Kidney (tissue), 22 donors: ENCODE measurements at regions of chr1 and their contacts with region 1.

Region 1: DNA sequence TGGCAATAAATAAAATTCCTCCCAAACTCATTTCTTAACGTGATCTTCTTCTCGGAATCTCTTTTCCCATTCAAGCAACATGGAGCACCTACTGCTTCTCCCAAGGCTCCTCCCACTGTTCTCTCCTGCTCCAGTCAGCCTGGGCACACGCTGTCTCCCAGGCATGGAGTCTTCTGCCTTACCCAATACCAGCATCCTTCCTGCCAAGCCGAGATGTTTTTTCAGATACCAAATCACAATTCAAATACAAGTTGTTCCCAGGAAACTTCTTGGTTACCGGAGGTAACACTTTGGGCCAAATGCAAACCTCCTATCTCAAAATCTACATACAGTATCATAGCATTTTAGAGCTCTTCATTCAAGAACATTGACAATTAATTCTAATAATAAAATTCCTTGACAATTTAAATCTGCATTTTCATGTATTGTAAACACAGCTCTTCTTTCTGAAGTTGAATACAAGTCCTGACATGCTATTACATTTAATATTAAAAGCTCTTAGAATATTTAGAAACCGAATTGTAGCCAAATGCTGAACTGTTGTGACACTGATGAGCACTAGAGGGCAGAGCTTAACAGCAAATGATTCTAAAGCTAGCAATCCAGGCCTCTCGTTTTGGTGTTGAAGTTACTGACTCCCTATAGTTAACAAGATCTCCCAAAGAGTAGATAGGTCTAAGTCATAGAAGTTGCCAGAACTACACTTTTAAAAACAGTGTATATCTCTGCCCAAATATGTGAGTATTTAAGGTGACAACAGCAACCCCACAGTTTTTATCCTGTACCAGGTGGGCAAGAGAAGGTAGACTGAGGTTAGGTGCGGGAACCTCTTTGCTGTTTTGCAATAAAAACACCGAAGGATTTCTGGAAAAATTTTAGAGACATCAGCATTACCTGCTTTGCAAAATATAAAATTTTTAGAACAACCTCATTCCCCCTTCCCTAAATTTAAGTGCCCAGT is 52.3 kb downstream of the BCAR3 start:
- DNase-seq: peak in 3 of 5 donors; percentile 61 to 87 (median 81)
- H3K4me3 ChIP-seq: no peak overlapping the region
- H3K27ac ChIP-seq: no peak overlapping the region
- H3K4me1 ChIP-seq: no peaks in the 10 kb centered on the region
- H3K27me3 ChIP-seq: no peaks in the 10 kb centered on the region
- CTCF ChIP-seq: peak; percentile 92

Region 2: DNA sequence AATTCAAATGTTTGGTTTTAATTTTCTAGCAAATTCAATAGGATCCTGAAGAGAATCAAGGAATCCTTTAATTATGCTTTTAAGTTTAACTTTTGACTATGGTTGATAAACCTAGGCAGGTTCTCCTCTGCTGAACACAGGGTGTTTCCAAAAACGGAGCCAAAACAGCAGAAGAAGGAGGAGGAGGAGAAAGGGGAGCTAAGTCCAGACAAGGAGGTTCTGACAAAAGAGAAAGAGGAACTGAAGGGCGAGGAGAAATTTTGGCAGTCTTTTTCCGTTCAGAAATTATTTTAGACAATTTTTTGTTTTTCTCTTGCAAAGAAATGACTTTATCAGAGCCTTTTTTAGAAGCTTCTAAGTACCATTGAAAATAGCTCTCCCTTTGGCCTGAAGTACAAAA is 214.6 kb before region 1 on chr1:
- intact Hi-C with region 1: no loop called
- DNase-seq: no peak
- H3K4me3 ChIP-seq: peak overlapping the region in 1 of 3 donors; percentile 11
- H3K27ac ChIP-seq: no peak overlapping the region
- H3K4me1 ChIP-seq: peaks cover 0 to 2% (median 0%) of the 10 kb centered on the region in 3 donors
- H3K27me3 ChIP-seq: no peaks in the 10 kb centered on the region
- CTCF ChIP-seq: no peak

Region 3: GRCh38 chr1:93814059-93814794 is 184.8 kb after region 1 on chr1:
- intact Hi-C with region 1: loop called (anchors 5 kb)
- DNase-seq: peak in 4 of 5 donors; percentile 74 to 89 (median 83)
- H3K4me3 ChIP-seq: no peak overlapping the region
- H3K27ac ChIP-seq: no peak overlapping the region
- H3K4me1 ChIP-seq: peaks cover 0 to 9% (median 0%) of the 10 kb centered on the region in 3 donors
- H3K27me3 ChIP-seq: no peaks in the 10 kb centered on the region
- CTCF ChIP-seq: peak; percentile 100

Region 4: GRCh38 chr1:93846211-93846991 is 217.0 kb after region 1 on chr1:
- intact Hi-C with region 1: no loop called
- DNase-seq: peak; percentile 92 to 96 (median 94)
- H3K4me3 ChIP-seq: peak overlapping the region; percentile 65 to 88 (median 75)
- H3K27ac ChIP-seq: peak overlapping the region; percentile 98 to 99
- H3K4me1 ChIP-seq: peaks cover 2 to 7% (median 7%) of the 10 kb centered on the region in 3 donors
- H3K27me3 ChIP-seq: no peaks in the 10 kb centered on the region
- CTCF ChIP-seq: peak; percentile 35